Breast epithelium (tissue), 4 donors: ENCODE measurements at regions of chr4 and their contacts with region 1.

Region 1: DNA sequence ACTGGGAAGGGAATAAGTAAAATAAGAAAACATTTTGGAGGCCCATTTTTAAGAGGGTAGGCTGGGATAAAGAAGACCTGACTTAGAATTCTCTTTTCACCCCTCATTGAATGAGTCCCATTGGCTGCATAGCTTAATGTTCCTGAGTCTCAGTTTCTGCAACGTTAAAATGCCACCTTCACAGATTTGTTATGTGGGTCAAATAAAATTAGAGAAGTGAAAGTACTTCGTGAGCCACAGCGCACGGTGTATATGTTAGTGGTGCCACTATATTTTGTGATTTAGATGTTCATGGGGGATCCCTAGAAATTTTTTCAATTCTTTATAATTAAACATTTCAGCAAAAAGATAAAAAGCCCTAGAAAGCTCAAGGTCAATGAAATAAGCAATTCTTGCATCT is 109.2 kb upstream of the HS3ST1 start:
- DNase-seq: no peak
- H3K4me3 ChIP-seq: no peak overlapping the region
- H3K27ac ChIP-seq: no peak overlapping the region
- H3K4me1 ChIP-seq: no peaks in the 10 kb centered on the region
- H3K27me3 ChIP-seq: no peaks in the 10 kb centered on the region
- CTCF ChIP-seq: no peak
- POLR2A ChIP-seq: no peak

Region 2: GRCh38 chr4:10253755-10254154 is 1284.1 kb before region 1 on chr4:
- intact Hi-C with region 1: loop called (anchors 5 kb)
- DNase-seq: no peak
- H3K4me3 ChIP-seq: no peak overlapping the region
- H3K27ac ChIP-seq: no peak overlapping the region
- H3K4me1 ChIP-seq: no peaks in the 10 kb centered on the region
- H3K27me3 ChIP-seq: no peaks in the 10 kb centered on the region
- CTCF ChIP-seq: no peak
- POLR2A ChIP-seq: no peak

Region 3: DNA sequence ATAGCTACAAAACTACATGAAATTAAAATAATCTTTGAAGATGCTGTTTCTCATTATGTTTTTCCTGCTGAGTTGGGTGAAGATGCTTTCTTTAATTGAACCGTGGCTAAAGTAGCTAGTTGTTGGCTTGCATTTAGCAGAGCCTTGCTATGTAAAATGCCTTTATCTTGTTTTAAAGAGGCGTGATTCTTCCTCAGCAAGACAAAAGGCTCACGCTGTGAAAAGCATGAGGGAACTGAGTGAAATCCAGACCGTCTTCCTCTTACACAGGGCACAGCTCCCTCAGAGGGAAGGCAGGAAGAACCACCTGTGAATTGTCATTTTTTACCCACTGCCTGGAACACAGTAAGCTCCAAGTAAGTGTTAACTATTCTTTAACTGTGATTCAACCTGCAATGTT is 1041.6 kb before region 1 on chr4:
- intact Hi-C with region 1: loop called (anchors 5 kb)
- DNase-seq: no peak
- H3K4me3 ChIP-seq: no peak overlapping the region
- H3K27ac ChIP-seq: no peak overlapping the region
- H3K4me1 ChIP-seq: no peaks in the 10 kb centered on the region
- H3K27me3 ChIP-seq: no peaks in the 10 kb centered on the region
- CTCF ChIP-seq: no peak
- POLR2A ChIP-seq: no peak

Region 4: GRCh38 chr4:10605746-10606482 is 931.9 kb before region 1 on chr4:
- intact Hi-C with region 1: no loop called
- DNase-seq: no peak
- H3K4me3 ChIP-seq: no peak overlapping the region
- H3K27ac ChIP-seq: no peak overlapping the region
- H3K4me1 ChIP-seq: no peaks in the 10 kb centered on the region
- H3K27me3 ChIP-seq: no peaks in the 10 kb centered on the region
- CTCF ChIP-seq: no peak
- POLR2A ChIP-seq: no peak

Region 5: DNA sequence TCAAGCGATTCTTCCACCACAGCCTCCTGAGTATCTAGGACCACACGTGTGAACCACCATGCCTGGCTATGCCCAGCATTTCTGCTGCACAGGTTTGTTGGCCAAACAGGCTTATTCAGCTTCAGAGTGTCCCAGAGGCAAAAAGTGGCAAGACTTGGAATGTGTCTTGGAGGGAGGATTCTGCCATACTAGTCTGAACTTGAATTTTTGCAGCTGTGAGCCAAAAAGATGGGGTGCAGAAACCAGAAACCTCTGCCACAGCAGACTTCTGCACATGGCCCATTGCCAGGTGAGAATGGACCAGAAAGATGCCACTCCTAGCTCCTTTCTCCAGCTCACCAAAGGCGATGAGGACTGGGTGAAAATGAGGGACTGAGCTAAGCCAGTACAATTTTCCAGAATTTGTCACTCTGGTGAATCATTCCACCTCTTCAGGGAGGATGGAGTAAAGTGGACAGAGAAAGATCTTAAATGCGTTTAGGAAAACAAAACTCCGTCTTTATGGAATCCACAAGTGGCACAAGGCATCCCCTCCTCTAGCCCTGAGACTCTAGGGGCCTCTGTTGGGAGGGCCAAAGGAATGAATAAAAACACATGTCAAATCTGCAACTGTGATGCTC is 484.1 kb before region 1 on chr4:
- intact Hi-C with region 1: no loop called
- DNase-seq: peak in 1 of 2 donors; percentile 33
- H3K4me3 ChIP-seq: no peak overlapping the region
- H3K27ac ChIP-seq: no peak overlapping the region
- H3K4me1 ChIP-seq: no peaks in the 10 kb centered on the region
- H3K27me3 ChIP-seq: no peaks in the 10 kb centered on the region
- CTCF ChIP-seq: no peak
- POLR2A ChIP-seq: no peak

Region 6: DNA sequence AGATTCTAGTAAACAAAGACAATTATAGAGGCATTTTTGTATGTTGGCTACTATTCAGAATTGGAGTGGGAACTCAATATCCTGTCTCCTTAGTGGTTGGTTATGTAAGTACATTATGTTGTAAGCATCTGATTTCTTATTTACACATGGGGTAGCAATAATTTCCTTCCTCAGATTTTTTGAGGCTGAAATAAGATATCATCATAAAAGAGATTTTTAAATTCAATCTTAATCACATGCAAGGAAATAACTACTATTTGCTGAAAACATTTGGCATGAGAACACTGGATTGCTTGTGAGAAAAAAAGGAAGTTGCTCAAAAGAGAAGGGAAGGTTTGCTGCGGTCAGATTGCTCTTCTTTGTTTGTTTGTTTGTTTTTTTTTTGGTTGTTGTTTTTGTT is 328.5 kb after region 1 on chr4:
- intact Hi-C with region 1: no loop called
- DNase-seq: no peak
- H3K4me3 ChIP-seq: no peak overlapping the region
- H3K27ac ChIP-seq: no peak overlapping the region
- H3K4me1 ChIP-seq: no peaks in the 10 kb centered on the region
- H3K27me3 ChIP-seq: no peaks in the 10 kb centered on the region
- CTCF ChIP-seq: no peak
- POLR2A ChIP-seq: no peak